Endothelial cell of umbilical vein (primary cell): ENCODE measurements at regions of chr13 and their contacts with region 1.

Region 1: GRCh38 chr13:24995226-24995804 is 100.6 kb upstream of the PABPC3 start:
- DNase-seq: peak; percentile 68
- H3K4me3 ChIP-seq: no peak overlapping the region
- H3K27ac ChIP-seq: no peak overlapping the region
- H3K4me1 ChIP-seq: no peaks in the 10 kb centered on the region
- H3K27me3 ChIP-seq: peaks cover 6 to 19% of the 10 kb centered on the region in 2 experiments
- CTCF ChIP-seq: peak; percentile 65 to 77
- POLR2A ChIP-seq: no peak

Region 2: GRCh38 chr13:24693862-24694471 is 301.3 kb before region 1 on chr13:
- CTCF ChIA-PET with region 1: interaction called, 20 read pairs
- POLR2A ChIA-PET with region 1: no interaction called
- dilution Hi-C with region 1: no loop called
- intact Hi-C with region 1: loop called (anchors 1 kb)
- DNase-seq: peak; percentile 47
- H3K4me3 ChIP-seq: no peak overlapping the region
- H3K27ac ChIP-seq: no peak overlapping the region
- H3K4me1 ChIP-seq: no peaks in the 10 kb centered on the region
- H3K27me3 ChIP-seq: peaks cover 0 to 2% of the 10 kb centered on the region in 2 experiments
- CTCF ChIP-seq: peak; percentile 68 to 69
- POLR2A ChIP-seq: no peak

Region 3: DNA sequence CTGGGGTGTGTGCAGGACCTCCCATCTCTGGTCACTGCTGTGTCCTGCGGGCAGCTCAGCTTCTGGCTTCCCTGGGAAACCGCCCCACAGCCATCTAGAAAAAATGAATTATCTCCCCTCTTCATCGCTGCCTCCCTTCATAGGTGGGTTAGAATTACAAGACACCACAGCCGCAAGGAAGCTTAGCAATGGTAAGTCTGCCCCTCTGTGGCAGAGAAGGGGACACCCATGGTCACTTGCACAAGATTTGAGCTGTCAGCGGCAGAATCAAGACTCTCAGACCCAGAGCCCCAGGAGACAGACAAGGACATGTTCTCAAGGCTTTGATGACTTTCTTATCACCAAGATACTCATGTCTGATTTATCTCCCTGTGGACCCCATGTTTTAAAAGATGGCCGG is 10.2 kb before region 1 on chr13:
- CTCF ChIA-PET with region 1: interaction called, 10 read pairs
- POLR2A ChIA-PET with region 1: no interaction called
- dilution Hi-C with region 1: no loop called
- intact Hi-C with region 1: no loop called
- DNase-seq: no peak
- H3K4me3 ChIP-seq: no peak overlapping the region
- H3K27ac ChIP-seq: no peak overlapping the region
- H3K4me1 ChIP-seq: no peaks in the 10 kb centered on the region
- H3K27me3 ChIP-seq: peaks cover 2 to 8% of the 10 kb centered on the region in 2 experiments
- CTCF ChIP-seq: no peak
- POLR2A ChIP-seq: no peak

Region 4: DNA sequence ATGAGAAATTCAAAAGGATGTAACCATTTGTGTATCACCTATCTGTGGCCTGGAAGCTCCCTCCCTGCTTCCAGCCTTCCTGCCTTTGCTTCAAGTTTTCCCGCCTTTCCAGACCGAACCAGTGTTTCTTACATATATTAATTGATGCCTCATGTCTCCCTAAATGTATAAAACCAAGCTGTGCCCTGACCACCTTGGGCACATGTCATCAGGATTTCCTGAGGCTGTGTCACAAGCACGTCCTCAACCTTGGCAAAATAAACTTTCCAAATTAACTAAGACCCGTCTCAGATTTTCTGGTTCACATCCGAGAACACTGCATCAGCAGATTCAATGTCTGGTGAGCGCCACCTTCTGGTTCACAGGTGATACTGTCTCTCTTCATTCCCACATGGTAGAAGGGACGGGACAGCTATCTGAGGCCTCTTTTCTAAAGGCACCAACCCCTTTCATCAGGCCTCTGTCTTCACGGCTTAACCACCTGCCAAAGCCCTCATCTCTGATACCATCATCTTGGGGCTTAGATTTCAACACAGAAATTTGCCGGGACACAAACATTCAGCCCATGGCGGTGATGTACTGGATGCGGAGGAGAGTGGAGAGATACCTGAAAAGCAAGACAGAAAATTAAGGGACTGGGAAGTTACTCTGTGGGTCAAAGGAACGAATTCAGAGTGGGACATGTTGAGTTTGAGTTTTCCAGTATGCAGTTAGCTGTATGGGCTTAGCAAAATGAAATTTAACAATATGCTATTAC is 41.9 kb after region 1 on chr13:
- CTCF ChIA-PET with region 1: interaction called, 16 read pairs
- POLR2A ChIA-PET with region 1: no interaction called
- dilution Hi-C with region 1: no loop called
- intact Hi-C with region 1: no loop called
- DNase-seq: peak; percentile 46
- H3K4me3 ChIP-seq: no peak overlapping the region
- H3K27ac ChIP-seq: no peak overlapping the region
- H3K4me1 ChIP-seq: no peaks in the 10 kb centered on the region
- H3K27me3 ChIP-seq: peaks cover 8 to 9% of the 10 kb centered on the region in 2 experiments
- CTCF ChIP-seq: peak; percentile 70 to 77
- POLR2A ChIP-seq: no peak

Region 5: GRCh38 chr13:25114220-25114619 is 118.9 kb after region 1 on chr13:
- CTCF ChIA-PET with region 1: interaction called, 12 read pairs
- POLR2A ChIA-PET with region 1: no interaction called
- dilution Hi-C with region 1: no loop called
- intact Hi-C with region 1: no loop called
- DNase-seq: peak; percentile 75
- H3K4me3 ChIP-seq: no peak overlapping the region
- H3K27ac ChIP-seq: no peak overlapping the region
- H3K4me1 ChIP-seq: no peaks in the 10 kb centered on the region
- H3K27me3 ChIP-seq: peaks cover 6 to 7% of the 10 kb centered on the region in 2 experiments
- CTCF ChIP-seq: peak; percentile 82 to 85
- POLR2A ChIP-seq: no peak